ENCODE measurements at regions of chr16 and their contacts with region 1.

Region 1: DNA sequence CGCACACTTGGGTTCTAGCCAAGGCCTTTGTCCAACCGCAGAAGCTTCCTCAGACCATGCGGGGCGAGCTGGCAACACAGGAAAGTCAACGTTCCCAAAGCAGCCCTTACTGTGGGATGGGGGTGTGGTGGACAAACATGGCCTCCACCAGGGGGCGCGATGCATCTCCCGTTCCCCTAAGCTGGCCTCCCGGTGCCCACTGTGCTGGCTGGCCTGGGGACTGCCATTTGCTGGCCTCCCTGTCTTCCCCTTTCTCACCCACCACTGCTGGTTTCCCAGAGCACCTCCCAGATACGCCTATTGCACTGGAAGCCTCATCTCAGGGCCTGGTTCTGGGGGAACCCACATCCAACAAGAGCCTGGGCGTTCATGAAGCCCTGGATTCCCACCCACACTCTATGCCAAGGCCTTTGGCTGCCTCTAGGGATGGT is 145.3 kb downstream of the IRF8 start:
- DNase-seq: peak; percentile 46 to 93
- H3K4me3 ChIP-seq: no peak overlapping the region
- H3K27ac ChIP-seq: no peak overlapping the region
- H3K4me1 ChIP-seq: peaks cover 0 to 1% (median 0%) of the 10 kb centered on the region in 4 experiments; a peak in 1 of 7 replicates
- H3K27me3 ChIP-seq: no peaks in the 10 kb centered on the region; a peak in 1 of 7 replicates
- CTCF ChIP-seq: peak; percentile 87 to 97 (median 94)
- EP300 ChIP-seq: no peak
- POLR2A ChIP-seq: no peak
- RAD21 ChIP-seq: peak; percentile 71 to 78

Region 2: DNA sequence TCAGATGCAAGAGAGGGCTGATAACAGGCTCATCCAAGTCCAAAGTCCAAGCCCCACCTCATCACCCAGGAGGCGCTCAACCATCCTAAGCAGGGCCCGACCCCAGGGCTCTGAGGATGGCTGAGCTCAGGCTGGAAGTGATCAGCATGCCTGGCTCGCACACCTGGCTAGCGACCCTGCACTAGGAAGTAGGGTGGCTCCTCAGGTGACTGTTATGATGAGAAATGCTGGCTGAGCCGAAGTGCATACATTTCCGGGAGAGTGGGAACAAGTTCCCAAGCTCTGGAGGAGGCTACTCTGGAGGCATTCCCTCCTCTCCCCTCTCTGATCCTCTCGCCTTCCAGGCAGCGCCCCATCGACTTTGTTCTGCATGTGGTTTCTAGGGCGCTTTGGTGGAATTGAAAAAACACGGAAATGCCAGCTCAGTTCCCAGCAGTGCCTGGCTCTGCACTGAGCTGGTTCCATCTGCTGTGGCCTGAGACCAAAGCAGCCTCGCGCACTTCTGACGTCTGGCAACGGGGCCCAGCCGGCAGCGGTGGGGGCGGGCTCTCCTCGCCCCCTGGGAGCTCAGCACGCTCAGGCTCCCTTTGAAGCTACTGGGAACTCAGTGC is 15.0 kb before region 1 on chr16:
- CTCF ChIA-PET with region 1: interaction called, 12 read pairs
- POLR2A ChIA-PET with region 1: interaction called, 3 read pairs
- DNase-seq: no peak
- H3K4me3 ChIP-seq: no peak overlapping the region
- H3K27ac ChIP-seq: no peak overlapping the region; the same call in 1 of the 2 replicates
- H3K4me1 ChIP-seq: peaks cover 0 to 13% (median 7%) of the 10 kb centered on the region in 4 experiments; a peak in 6 of 7 replicates
- H3K27me3 ChIP-seq: peaks cover 0 to 3% (median 0%) of the 10 kb centered on the region in 4 experiments; a peak in 2 of 7 replicates
- CTCF ChIP-seq: no peak
- EP300 ChIP-seq: no peak
- POLR2A ChIP-seq: no peak
- RAD21 ChIP-seq: no peak